ENCODE measurements at regions of chr13 and their contacts with region 1.

Region 1: GRCh38 chr13:36346222-36347083 is at the start of gene SPART:
- DNase-seq: peak; percentile 96
- H3K4me3 Mint-ChIP-seq: peak within 1 kb of the TSS; percentile 92
- H3K27ac Mint-ChIP-seq: peak within 1 kb of the TSS; percentile 92
- H3K4me1 Mint-ChIP-seq: peaks cover 16% of the 10 kb centered on the region
- H3K27me3 Mint-ChIP-seq: peaks cover 5% of the 10 kb centered on the region
- total RNA-seq, gene SPART: 25.3 and 31.8 TPM in 2 replicates

Region 2: DNA sequence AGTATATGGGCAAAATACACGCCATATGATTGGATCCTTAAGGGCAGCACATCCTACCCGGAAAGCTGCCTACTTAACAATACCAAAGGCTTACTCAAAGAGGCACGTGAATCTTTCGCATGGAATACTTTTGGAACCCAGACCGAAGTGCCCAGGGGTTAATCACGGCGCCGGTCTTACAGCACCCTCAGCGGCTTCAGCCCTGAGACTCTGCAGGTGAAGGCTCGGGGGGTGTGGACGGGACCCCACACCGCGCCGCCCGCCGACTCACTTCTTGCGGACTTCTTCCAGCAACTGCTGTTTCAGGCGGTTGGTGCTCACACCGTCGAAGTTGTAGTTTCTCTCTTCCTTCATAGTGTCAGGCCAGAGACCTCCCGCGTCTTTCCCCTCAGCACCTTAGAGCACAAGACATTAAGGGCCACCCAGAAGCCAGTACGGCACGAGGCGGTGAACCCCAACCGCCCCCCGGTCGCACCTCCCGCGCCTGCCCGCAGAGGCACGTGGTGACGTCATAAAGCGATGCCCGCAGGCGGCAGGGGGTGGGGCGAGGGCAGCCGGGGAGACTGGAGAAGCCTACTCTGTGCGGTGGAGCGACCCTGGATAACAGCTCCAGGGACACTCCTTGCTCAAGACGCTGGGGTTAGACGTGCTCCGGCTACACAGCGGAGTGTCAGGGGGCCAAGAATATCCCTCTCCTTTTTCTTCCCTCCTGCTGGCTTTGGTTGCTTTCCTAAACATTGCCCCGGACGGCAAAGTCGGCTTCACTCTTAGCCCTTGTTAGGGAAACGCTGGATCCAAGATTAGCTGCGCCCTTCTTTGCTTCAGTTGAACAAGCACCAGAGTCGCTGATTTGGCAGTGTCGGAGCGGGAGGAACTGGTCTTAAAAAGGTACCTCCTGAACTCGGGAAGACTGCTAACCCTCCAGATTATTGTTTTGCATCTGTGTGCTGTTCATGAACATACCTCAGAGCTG is 48.8 kb before region 1 on chr13 and contains the start of gene CCDC169:
- intact Hi-C with region 1: loop called (anchors 1 kb)
- DNase-seq: peak; percentile 89
- H3K4me3 Mint-ChIP-seq: peak within 1 kb of the TSS; percentile 90
- H3K27ac Mint-ChIP-seq: peak within 1 kb of the TSS; percentile 64
- H3K4me1 Mint-ChIP-seq: peaks cover 11% of the 10 kb centered on the region
- H3K27me3 Mint-ChIP-seq: peaks cover 31% of the 10 kb centered on the region
- total RNA-seq, gene CCDC169: 0.35 and 0.50 TPM in 2 replicates

Region 3: GRCh38 chr13:36431654-36432511 is 85.4 kb after region 1 on chr13 and contains the start of gene CCNA1:
- intact Hi-C with region 1: loop called (anchors 5 kb)
- DNase-seq: peak; percentile 79
- H3K4me3 Mint-ChIP-seq: peak within 1 kb of the TSS; percentile 77
- H3K27ac Mint-ChIP-seq: no peak within 1 kb of the TSS
- H3K4me1 Mint-ChIP-seq: peaks cover 16% of the 10 kb centered on the region
- H3K27me3 Mint-ChIP-seq: peaks cover 47% of the 10 kb centered on the region
- total RNA-seq, gene CCNA1: 2.1 and 2.2 TPM in 2 replicates

Region 4: GRCh38 chr13:36818804-36819738 is 472.6 kb after region 1 on chr13 and contains the start of gene RFXAP:
- intact Hi-C with region 1: loop called (anchors 1 kb)
- DNase-seq: peak; percentile 98
- H3K4me3 Mint-ChIP-seq: peak within 1 kb of the TSS; percentile 96
- H3K27ac Mint-ChIP-seq: peak within 1 kb of the TSS; percentile 97
- H3K4me1 Mint-ChIP-seq: peaks cover 45% of the 10 kb centered on the region
- H3K27me3 Mint-ChIP-seq: peaks cover 16% of the 10 kb centered on the region
- total RNA-seq, gene RFXAP: 18.0 and 20.9 TPM in 2 replicates

Region 5: DNA sequence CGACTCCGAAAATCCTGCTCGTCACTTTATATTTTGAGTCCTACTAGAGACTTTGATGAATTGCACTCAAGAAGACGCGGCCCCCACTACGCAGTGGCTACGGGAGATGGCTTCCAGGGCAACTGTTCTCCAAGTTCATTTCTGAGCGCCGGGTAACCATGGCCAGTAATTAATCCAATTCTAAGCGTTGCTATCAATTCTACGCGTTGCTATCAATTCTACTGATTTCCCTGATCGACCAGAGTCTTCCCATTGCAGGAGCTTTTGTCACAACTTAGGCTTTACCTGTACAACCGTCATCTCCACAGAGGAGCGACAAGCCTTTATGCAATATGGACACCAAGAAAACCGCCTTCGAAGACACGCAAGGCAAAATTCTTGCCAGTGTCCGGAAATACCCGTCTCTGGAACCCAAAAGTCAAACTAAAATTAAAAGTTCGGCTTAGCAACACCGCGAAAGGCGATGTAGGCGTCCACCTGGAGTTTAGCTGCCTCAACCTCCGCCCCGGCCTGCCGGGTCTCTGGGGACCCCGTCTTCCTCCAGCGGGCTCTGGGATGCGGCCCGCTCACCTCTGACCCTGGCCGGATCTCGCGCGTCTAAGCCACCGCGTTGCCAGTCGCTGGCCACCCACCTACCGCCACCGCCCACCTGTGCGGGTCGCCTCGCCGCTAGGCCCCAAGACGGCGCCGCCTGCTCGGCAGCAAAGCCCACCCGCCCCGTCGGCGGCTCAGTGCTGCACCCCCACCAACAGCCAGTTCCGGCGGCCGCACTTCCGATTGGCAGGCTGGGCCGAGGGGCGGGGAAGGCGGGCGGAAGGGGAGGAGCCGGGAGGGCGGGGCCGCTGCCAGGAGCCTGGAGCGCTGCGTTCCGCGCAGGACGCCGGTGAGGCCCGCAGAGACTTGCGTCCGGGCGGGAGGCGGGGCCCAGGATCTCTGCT is 712.7 kb after region 1 on chr13 and contains the start of gene SUPT20H:
- intact Hi-C with region 1: loop called (anchors 2 kb)
- DNase-seq: peak; percentile 97
- H3K4me3 Mint-ChIP-seq: peak within 1 kb of the TSS; percentile 87
- H3K27ac Mint-ChIP-seq: peak within 1 kb of the TSS; percentile 97
- H3K4me1 Mint-ChIP-seq: peaks cover 20% of the 10 kb centered on the region
- H3K27me3 Mint-ChIP-seq: peaks cover 9% of the 10 kb centered on the region
- total RNA-seq, gene SUPT20H: 67.4 and 74.8 TPM in 2 replicates